GM13977 (cell line): ENCODE measurements at regions of chr17 and their contacts with region 1.

Region 1: GRCh38 chr17:19805006-19805405 is 56.9 kb upstream of the ALDH3A1 start:
- DNase-seq: no peak
- CTCF ChIP-seq: no peak

Region 2: GRCh38 chr17:19867064-19867313 is 62.0 kb after region 1 on chr17:
- in situ Hi-C with region 1: loop called (anchors 10 kb)
- DNase-seq: peak; percentile 68
- CTCF ChIP-seq: no peak